Activated CD8-positive, alpha-beta T cell treated with anti-CD3 and anti-CD28 coated beads for 36 hours (primary cell): ENCODE measurements at regions of chr6 and their contacts with region 1.

Region 1: GRCh38 chr6:130322673-130323268 is 43.0 kb upstream of the TMEM200A start:
- DNase-seq: peak; percentile 68
- ATAC-seq: peak; percentile 39
- H3K4me3 Mint-ChIP-seq: no peak overlapping the region
- H3K27ac Mint-ChIP-seq: no peak overlapping the region
- H3K4me1 Mint-ChIP-seq: no peaks in the 10 kb centered on the region
- H3K27me3 Mint-ChIP-seq: no peaks in the 10 kb centered on the region
- CTCF ChIP-seq: peak; percentile 90

Region 2: DNA sequence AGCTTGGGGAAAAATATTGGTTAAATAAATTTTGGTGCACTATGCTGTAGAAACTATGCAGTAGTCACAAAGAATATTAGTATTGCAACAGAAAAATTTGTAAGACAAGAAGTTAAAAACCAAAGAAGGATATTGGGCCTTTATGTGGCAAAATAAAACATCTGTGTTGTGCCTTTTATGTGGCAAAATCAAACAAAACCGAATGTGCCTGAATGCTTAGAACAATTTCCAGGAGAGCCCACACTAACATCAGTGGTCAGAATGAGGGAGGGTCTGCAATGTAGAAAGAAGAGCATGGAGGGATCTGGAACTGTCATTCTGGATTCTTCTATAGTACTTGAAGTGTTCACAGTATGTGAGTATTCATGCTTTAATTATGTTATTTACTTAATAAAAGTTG is 229.2 kb before region 1 on chr6:
- CTCF ChIA-PET with region 1: no interaction called
- POLR2A ChIA-PET with region 1: no interaction called
- intact Hi-C with region 1: no loop called
- DNase-seq: no peak
- ATAC-seq: no peak
- H3K4me3 Mint-ChIP-seq: no peak overlapping the region
- H3K27ac Mint-ChIP-seq: no peak overlapping the region
- H3K4me1 Mint-ChIP-seq: peaks cover 11% of the 10 kb centered on the region
- H3K27me3 Mint-ChIP-seq: no peaks in the 10 kb centered on the region
- CTCF ChIP-seq: no peak

Region 3: DNA sequence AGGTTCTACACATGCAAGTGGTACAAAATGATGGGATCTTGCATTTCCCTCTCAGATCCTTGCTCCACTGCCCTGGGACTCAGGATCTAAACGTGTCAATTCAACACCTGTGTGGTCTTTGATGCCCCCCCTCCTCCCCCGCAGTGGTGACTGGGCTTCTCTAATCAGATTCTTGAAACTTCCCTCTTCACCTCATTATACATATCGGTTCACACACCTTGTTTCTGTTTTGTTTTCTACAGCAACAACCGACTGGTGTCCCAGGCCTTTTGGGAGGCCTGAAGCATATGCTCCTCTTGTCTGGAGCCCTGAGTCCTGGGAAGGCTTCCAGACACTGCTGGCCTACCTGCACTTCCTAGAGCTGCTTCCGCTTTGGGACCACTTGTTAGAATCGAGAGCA is 120.0 kb before region 1 on chr6:
- CTCF ChIA-PET with region 1: no interaction called
- POLR2A ChIA-PET with region 1: no interaction called
- intact Hi-C with region 1: no loop called
- DNase-seq: peak; percentile 64
- ATAC-seq: peak; percentile 74
- H3K4me3 Mint-ChIP-seq: peak overlapping the region; percentile 30
- H3K27ac Mint-ChIP-seq: peak overlapping the region; percentile 73
- H3K4me1 Mint-ChIP-seq: peaks cover 46% of the 10 kb centered on the region
- H3K27me3 Mint-ChIP-seq: no peaks in the 10 kb centered on the region
- CTCF ChIP-seq: no peak

Region 4: GRCh38 chr6:130489514-130489913 is 166.7 kb after region 1 on chr6:
- CTCF ChIA-PET with region 1: no interaction called
- POLR2A ChIA-PET with region 1: no interaction called
- intact Hi-C with region 1: no loop called
- DNase-seq: no peak
- ATAC-seq: no peak
- H3K4me3 Mint-ChIP-seq: no peak overlapping the region
- H3K27ac Mint-ChIP-seq: no peak overlapping the region
- H3K4me1 Mint-ChIP-seq: no peaks in the 10 kb centered on the region
- H3K27me3 Mint-ChIP-seq: no peaks in the 10 kb centered on the region
- CTCF ChIP-seq: no peak

Region 5: GRCh38 chr6:130843575-130844320 is 521.0 kb after region 1 on chr6:
- CTCF ChIA-PET with region 1: interaction called, 6 read pairs
- POLR2A ChIA-PET with region 1: no interaction called
- intact Hi-C with region 1: loop called (anchors 2 kb)
- DNase-seq: no peak
- ATAC-seq: peak; percentile 76
- H3K4me3 Mint-ChIP-seq: no peak overlapping the region
- H3K27ac Mint-ChIP-seq: no peak overlapping the region
- H3K4me1 Mint-ChIP-seq: peaks cover 1% of the 10 kb centered on the region
- H3K27me3 Mint-ChIP-seq: no peaks in the 10 kb centered on the region
- CTCF ChIP-seq: peak; percentile 46

Region 6: DNA sequence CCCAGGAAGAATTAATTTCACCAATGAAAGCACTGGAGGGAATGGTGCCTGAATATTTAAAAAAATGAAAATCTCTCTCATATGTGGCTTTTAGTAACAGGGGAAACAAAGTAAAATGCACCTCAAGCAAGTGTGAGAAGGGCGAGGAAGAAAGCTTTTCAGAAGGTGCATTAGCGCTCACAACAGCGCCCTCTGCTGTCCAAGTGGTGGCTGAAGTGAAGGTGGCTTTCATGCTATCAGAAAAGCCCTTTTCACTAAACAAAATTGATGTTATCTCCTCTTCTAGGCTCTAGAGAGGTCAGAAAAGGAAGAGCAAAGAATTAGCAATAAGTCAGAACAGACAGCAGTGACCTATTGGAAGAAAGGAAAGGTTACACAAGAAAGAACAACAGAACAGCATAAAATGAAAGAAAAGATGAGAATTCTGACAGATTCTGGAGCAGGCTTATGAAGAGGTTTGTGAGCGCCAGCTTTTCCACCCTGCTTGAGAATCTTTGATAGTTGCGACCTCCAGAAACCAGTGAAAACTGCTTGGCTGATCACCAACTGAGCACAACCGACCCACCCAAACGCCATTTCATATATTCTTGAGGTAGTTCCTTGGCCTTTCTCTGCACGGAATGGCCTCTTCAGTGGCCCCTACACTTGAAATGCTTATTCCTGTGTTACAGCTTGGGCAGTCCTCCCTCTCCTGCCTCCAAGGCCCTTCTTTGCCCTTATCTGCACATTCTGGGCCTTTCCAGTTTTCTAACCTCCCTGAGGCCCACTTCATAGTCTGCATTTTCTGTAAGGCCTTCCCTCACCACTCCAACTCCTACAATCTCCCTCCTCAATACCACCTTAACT is 549.7 kb after region 1 on chr6:
- CTCF ChIA-PET with region 1: interaction called, 14 read pairs
- POLR2A ChIA-PET with region 1: no interaction called
- intact Hi-C with region 1: no loop called
- DNase-seq: peak; percentile 86
- ATAC-seq: peak; percentile 47
- H3K4me3 Mint-ChIP-seq: no peak overlapping the region
- H3K27ac Mint-ChIP-seq: no peak overlapping the region
- H3K4me1 Mint-ChIP-seq: no peaks in the 10 kb centered on the region
- H3K27me3 Mint-ChIP-seq: no peaks in the 10 kb centered on the region
- CTCF ChIP-seq: peak; percentile 93